Activated B cell treated with CpG ODN at 0.5 μM for 24 hours (primary cell): ENCODE measurements at regions of chr11 and their contacts with region 1.

Region 1: DNA sequence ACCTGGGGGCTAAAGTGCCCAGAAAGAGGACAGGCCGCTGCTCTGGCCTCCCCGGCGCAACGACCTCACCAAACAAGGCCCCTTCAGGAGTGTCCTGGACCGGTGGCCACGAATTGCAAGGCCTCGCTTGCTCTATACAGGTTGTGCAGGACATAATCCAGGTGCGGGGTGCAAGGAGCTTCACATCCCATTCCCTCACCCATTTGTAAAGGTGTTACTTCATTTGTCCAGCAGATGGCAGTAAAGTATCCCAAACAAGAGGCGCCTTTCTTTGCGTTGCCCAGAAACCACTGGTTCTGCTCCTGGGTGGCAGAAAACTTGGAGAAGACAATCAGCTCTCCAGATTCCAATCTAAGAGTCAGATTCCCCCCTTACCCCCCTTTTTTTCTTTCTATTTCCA is 35.9 kb upstream of the PRDM11 start:
- DNase-seq: no peak
- ATAC-seq: peak; percentile 73
- H3K4me3 Mint-ChIP-seq: no peak overlapping the region
- H3K27ac Mint-ChIP-seq: no peak overlapping the region
- H3K4me1 Mint-ChIP-seq: peaks cover 8% of the 10 kb centered on the region
- H3K27me3 Mint-ChIP-seq: peaks cover 38% of the 10 kb centered on the region
- CTCF ChIP-seq: no peak

Region 2: DNA sequence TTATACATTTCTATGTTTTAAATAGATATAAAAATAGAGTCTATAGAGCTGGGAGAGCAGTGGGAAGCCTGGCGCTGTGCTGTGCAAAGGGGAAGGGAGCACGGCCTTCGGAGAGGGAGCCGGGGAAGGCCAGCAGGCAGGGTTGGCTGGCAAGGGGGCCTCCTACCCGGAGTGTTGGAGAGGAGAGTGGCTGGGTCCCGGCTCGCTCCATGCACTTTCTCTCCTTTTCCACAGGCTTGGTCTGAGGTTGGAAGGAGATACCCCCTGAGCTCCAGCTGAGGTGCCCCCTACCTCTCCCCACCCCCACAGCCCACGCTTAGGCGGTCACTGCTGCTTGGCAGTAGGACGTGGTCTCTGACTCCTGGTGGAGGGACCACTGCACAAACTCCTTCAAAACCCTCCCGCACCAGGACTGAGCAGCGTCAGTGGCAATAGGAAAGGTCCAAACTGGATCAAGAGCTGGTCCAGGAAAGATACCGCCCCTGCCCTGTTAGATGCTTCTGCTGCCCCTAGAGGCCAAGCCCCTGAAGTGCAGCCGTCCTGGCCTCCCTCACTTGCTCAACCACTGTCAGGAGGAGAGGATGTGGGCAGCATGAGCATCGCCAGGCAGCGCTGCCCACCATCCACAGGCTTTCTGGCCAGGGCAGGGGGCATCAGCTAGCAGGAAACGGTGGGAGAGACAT is 122.7 kb after region 1 on chr11:
- CTCF ChIA-PET with region 1: interaction called, 7 read pairs
- POLR2A ChIA-PET with region 1: no interaction called
- intact Hi-C with region 1: loop called (anchors 5 kb)
- DNase-seq: peak; percentile 46
- ATAC-seq: peak; percentile 71
- H3K4me3 Mint-ChIP-seq: no peak overlapping the region
- H3K27ac Mint-ChIP-seq: no peak overlapping the region
- H3K4me1 Mint-ChIP-seq: no peaks in the 10 kb centered on the region
- H3K27me3 Mint-ChIP-seq: peaks cover 15% of the 10 kb centered on the region
- CTCF ChIP-seq: peak; percentile 41

Region 3: DNA sequence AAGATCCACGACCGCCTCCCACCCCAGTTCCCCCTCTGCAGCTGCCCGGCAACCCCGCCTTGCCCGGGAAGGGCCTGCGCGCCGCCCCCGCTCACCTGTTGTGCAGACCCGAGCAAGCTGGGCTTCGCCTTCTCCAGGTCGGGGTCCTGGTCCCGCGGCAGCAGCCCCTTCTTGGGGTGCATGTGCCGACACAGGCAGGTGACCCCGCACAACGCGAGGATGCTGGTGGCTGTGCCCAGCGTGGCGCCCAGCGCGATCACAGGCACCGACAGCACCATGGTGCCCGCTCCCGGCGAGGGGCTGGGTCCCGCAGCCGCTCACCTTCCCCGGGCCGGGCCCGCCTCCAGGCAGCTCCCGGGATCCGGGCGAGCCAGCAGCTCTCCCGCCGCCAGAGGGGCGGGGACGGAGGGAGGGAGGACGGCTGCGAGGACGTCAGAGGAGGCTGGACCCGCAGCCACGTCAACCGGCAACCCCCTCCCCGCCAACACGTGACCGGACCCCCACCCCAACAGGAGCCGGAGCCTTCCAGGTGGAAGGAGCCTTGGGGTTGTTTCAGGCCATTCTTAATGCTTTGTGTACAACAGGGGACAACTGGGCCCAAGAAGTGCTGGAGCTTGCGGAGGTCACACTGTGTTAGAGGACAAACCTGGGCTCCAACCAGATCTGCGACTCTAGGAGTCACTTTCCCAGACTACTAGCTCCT is 175.5 kb after region 1 on chr11 and contains the start of gene SYT13:
- CTCF ChIA-PET with region 1: interaction called, 21 read pairs
- POLR2A ChIA-PET with region 1: no interaction called
- intact Hi-C with region 1: no loop called
- DNase-seq: no peak
- ATAC-seq: no peak
- H3K4me3 Mint-ChIP-seq: no peak within 1 kb of the TSS
- H3K27ac Mint-ChIP-seq: no peak within 1 kb of the TSS
- H3K4me1 Mint-ChIP-seq: no peaks in the 10 kb centered on the region
- H3K27me3 Mint-ChIP-seq: peaks cover 73% of the 10 kb centered on the region
- CTCF ChIP-seq: no peak
- total RNA-seq, gene SYT13: not detected in 2 replicates

Region 4: DNA sequence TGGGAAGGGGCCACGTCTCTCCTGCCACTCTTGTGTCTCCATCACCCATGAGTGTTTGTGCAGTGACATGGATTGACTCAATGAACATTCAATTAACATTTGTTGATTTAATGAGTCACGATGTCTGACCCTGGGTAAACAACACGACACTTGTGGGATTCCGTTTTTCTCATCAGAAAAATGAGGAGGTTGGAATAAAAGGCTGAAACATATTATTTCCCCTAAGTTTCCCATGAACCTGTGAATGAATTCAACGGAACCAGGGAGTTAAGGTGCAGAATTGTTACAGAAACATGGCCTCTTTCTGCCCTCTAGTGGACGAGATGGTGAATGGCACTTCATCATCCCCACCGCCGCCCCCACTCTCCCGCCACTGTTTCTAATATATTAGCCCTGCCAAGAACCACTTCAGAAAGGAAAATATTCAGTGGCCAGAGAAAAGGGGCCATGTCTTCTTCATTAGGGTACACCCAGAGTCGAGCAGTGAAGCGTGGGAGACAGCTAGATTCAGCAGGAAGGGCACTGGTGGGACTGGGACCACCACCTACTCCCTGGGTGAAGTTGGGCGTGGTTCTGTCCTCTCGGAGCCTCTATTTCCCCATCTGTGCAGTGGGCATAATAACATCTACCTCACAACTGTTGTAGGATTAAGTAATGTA is 221.8 kb after region 1 on chr11:
- CTCF ChIA-PET with region 1: interaction called, 153 read pairs
- POLR2A ChIA-PET with region 1: interaction called, 4 read pairs
- intact Hi-C with region 1: loop called (anchors 1 kb)
- DNase-seq: no peak
- ATAC-seq: peak; percentile 81
- H3K4me3 Mint-ChIP-seq: no peak overlapping the region
- H3K27ac Mint-ChIP-seq: no peak overlapping the region
- H3K4me1 Mint-ChIP-seq: peaks cover 2% of the 10 kb centered on the region
- H3K27me3 Mint-ChIP-seq: peaks cover 26% of the 10 kb centered on the region
- CTCF ChIP-seq: no peak

Region 5: DNA sequence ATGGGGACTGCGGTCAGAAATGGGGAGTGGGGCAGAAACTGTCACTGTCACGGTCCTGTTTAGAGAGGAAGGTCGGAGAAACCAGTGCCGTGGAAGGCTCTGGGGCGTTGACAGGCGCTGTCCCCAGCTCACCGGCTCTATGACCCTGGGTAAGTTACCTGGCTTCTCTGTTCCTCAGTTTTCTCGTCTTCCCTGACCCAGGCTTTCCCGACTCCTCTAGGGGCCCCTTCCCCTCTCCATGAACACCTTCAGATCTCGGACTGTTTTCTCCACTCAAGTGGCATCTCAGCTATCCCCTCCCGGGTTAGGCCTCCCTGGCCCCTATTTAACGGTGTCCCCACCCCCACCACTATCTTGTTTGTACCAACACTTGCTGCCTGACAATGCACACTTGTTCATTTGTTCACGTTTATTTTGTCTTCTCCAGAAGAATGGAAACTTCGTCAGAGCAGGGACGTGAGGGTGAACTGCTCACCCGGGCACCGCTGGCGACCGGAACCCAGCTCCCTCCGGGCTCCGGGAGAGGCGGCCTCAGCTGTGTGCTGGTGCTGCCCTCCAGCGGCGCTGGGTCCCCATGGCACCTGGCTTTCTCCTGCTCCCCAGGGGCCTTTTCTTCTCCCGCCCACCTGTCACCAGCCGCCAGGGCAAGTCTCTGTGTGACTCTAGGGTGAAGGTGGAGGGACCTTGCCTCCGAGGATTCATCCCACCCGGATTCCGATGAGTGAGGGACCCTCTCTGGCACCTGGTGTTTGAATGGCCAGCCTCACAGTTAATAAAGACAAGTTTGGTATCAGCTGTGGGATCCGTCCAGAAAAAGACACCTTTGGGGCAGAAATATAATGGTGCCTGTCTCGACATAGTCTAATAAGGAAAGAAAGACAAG is 661.2 kb after region 1 on chr11:
- CTCF ChIA-PET with region 1: interaction called, 7 read pairs
- POLR2A ChIA-PET with region 1: no interaction called
- intact Hi-C with region 1: loop called (anchors 2 kb)
- DNase-seq: peak; percentile 71
- ATAC-seq: peak; percentile 88
- H3K4me3 Mint-ChIP-seq: peak overlapping the region; percentile 89
- H3K27ac Mint-ChIP-seq: peak overlapping the region; percentile 64
- H3K4me1 Mint-ChIP-seq: peaks cover 9% of the 10 kb centered on the region
- H3K27me3 Mint-ChIP-seq: peaks cover 3% of the 10 kb centered on the region
- CTCF ChIP-seq: no peak